ENCODE measurements at regions of chr16 and their contacts with region 1.

Region 1: GRCh38 chr16:50806099-50807062 is 64.5 kb downstream of the CYLD start:
- DNase-seq: peak; percentile 90
- H3K4me3 Mint-ChIP-seq: peak overlapping the region; percentile 67
- H3K27ac Mint-ChIP-seq: peak overlapping the region; percentile 72
- H3K4me1 Mint-ChIP-seq: peaks cover 12% of the 10 kb centered on the region
- H3K27me3 Mint-ChIP-seq: no peaks in the 10 kb centered on the region

Region 2: GRCh38 chr16:50326949-50327402 is 479.4 kb before region 1 on chr16:
- CTCF ChIA-PET with region 1: interaction called, 40 read pairs
- POLR2A ChIA-PET with region 1: no interaction called
- intact Hi-C with region 1: loop called (anchors 1 kb)
- DNase-seq: peak; percentile 81
- H3K4me3 Mint-ChIP-seq: no peak overlapping the region
- H3K27ac Mint-ChIP-seq: peak overlapping the region; percentile 45
- H3K4me1 Mint-ChIP-seq: peaks cover 59% of the 10 kb centered on the region
- H3K27me3 Mint-ChIP-seq: no peaks in the 10 kb centered on the region

Region 3: GRCh38 chr16:50464325-50465290 is 341.8 kb before region 1 on chr16:
- CTCF ChIA-PET with region 1: interaction called, 10 read pairs
- POLR2A ChIA-PET with region 1: no interaction called
- intact Hi-C with region 1: no loop called
- DNase-seq: no peak
- H3K4me3 Mint-ChIP-seq: no peak overlapping the region
- H3K27ac Mint-ChIP-seq: no peak overlapping the region
- H3K4me1 Mint-ChIP-seq: peaks cover 6% of the 10 kb centered on the region
- H3K27me3 Mint-ChIP-seq: peaks cover 21% of the 10 kb centered on the region

Region 4: DNA sequence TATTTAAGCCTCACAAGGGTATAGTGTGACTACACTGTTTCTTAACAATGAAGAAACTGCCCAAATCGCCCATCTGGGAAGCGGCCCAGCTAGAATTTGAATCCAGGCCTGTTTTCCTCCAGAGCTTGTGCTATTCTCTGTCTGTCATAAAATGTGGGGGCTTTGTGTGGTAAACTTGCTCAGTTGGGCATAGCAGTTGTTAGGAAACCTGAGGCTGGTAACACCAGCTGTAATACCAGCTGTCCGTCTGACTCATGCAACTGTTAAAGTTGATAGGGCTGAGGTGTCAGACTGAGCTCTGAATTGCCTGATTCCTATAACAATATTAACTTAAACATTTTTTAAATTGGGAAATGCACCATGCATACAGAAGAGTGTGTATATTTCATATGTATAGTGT is 103.7 kb before region 1 on chr16:
- CTCF ChIA-PET with region 1: interaction called, 10 read pairs
- POLR2A ChIA-PET with region 1: no interaction called
- intact Hi-C with region 1: no loop called
- DNase-seq: peak; percentile 40
- H3K4me3 Mint-ChIP-seq: no peak overlapping the region
- H3K27ac Mint-ChIP-seq: peak overlapping the region; percentile 51
- H3K4me1 Mint-ChIP-seq: peaks cover 76% of the 10 kb centered on the region
- H3K27me3 Mint-ChIP-seq: no peaks in the 10 kb centered on the region

Region 5: GRCh38 chr16:50756473-50756872 is 49.9 kb before region 1 on chr16:
- CTCF ChIA-PET with region 1: interaction called, 45 read pairs
- POLR2A ChIA-PET with region 1: no interaction called
- intact Hi-C with region 1: no loop called
- DNase-seq: no peak
- H3K4me3 Mint-ChIP-seq: no peak overlapping the region
- H3K27ac Mint-ChIP-seq: no peak overlapping the region
- H3K4me1 Mint-ChIP-seq: peaks cover 73% of the 10 kb centered on the region
- H3K27me3 Mint-ChIP-seq: no peaks in the 10 kb centered on the region

Region 6: DNA sequence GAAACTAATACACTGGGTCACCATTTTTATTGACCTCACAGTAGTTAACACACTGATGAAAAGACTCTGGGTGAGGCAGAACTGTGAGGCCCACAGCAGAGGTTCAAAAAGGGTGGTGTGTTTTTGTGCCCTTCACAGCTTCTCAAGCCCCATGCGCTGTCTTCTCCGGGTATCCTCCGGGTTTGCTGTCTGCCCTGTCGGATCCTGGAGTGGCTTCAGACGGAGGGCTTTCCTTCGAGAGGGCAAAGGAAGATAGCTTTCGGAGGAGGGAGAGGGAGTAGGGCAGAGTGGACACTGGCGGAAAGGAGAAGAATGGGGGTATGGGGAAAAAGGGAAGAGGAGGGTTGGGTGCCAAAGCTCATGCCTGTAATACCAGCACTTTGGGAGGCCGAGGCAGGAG is 16.3 kb after region 1 on chr16:
- CTCF ChIA-PET with region 1: interaction called, 34 read pairs
- POLR2A ChIA-PET with region 1: no interaction called
- intact Hi-C with region 1: no loop called
- DNase-seq: no peak
- H3K4me3 Mint-ChIP-seq: no peak overlapping the region
- H3K27ac Mint-ChIP-seq: no peak overlapping the region
- H3K4me1 Mint-ChIP-seq: no peaks in the 10 kb centered on the region
- H3K27me3 Mint-ChIP-seq: peaks cover 7% of the 10 kb centered on the region

Region 7: GRCh38 chr16:50884066-50884860 is 77.9 kb after region 1 on chr16:
- CTCF ChIA-PET with region 1: no interaction called
- POLR2A ChIA-PET with region 1: no interaction called
- intact Hi-C with region 1: no loop called
- DNase-seq: peak; percentile 47
- H3K4me3 Mint-ChIP-seq: no peak overlapping the region
- H3K27ac Mint-ChIP-seq: no peak overlapping the region
- H3K4me1 Mint-ChIP-seq: no peaks in the 10 kb centered on the region
- H3K27me3 Mint-ChIP-seq: peaks cover 12% of the 10 kb centered on the region

Region 8: GRCh38 chr16:51024703-51025102 is 218.3 kb after region 1 on chr16:
- CTCF ChIA-PET with region 1: no interaction called
- POLR2A ChIA-PET with region 1: no interaction called
- intact Hi-C with region 1: no loop called
- DNase-seq: no peak
- H3K4me3 Mint-ChIP-seq: no peak overlapping the region
- H3K27ac Mint-ChIP-seq: no peak overlapping the region
- H3K4me1 Mint-ChIP-seq: no peaks in the 10 kb centered on the region
- H3K27me3 Mint-ChIP-seq: peaks cover 2% of the 10 kb centered on the region

Measured in activated CD4-positive, alpha-beta memory T cell treated with anti-CD3 and anti-CD28 coated beads for 36 hours (primary cell).